Endothelial cell of umbilical vein (primary cell): ENCODE measurements at regions of chr6 and their contacts with region 1.

Region 1: DNA sequence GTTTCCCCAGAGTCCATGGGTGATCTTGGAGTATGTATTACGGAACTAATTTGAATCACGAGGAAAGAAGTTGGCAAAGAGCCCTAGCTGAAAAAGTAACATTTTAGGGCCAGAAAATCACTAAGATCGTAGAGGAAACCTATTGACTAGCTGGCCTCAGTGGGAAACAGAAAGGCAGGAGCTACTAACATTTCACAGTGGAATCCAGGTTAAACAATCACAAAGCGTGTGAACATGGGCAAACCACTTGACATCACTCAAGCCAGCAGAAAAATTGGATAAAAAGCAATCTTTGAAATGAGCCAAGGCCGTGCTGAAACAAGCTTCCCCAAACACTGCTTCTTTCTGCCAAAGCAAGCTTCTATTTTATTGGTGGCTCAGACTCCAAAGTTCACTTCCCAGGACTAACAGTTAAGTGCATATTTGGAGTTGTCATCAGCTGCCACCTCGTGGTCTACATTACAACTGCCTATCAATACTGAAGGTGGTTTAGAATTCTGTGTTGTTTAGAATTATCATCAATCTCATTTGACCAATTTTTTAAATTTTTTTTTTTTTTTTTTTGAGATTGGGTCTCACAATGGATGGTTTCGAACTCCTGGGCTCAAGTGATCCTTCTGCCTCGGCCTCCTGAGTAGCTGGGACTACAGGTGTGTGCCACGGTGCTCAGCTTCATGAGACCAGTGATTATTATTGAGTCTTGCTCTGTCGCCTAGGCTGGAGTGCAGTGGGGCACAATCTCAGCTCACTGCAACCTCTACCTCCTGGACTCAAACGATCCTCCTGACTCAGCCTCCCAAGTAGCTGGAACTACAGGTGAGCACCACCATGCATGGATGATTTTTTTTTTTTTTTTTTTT is 10.6 kb downstream of the RPS10 start:
- DNase-seq: peak; percentile 77
- H3K4me3 ChIP-seq: no peak overlapping the region
- H3K27ac ChIP-seq: no peak overlapping the region
- H3K4me1 ChIP-seq: no peaks in the 10 kb centered on the region
- H3K27me3 ChIP-seq: no peaks in the 10 kb centered on the region
- CTCF ChIP-seq: peak; percentile 55 to 56
- POLR2A ChIP-seq: no peak

Region 2: GRCh38 chr6:32971581-32972352 is 1443.5 kb before region 1 on chr6:
- CTCF ChIA-PET with region 1: no interaction called
- POLR2A ChIA-PET with region 1: no interaction called
- dilution Hi-C with region 1: no loop called
- intact Hi-C with region 1: no loop called
- DNase-seq: peak; percentile 100
- H3K4me3 ChIP-seq: peak overlapping the region; percentile 83 to 96 (median 91)
- H3K27ac ChIP-seq: peak overlapping the region; percentile 99
- H3K4me1 ChIP-seq: peaks cover 29% of the 10 kb centered on the region
- H3K27me3 ChIP-seq: no peaks in the 10 kb centered on the region
- CTCF ChIP-seq: no peak
- POLR2A ChIP-seq: peak; percentile 100

Region 3: DNA sequence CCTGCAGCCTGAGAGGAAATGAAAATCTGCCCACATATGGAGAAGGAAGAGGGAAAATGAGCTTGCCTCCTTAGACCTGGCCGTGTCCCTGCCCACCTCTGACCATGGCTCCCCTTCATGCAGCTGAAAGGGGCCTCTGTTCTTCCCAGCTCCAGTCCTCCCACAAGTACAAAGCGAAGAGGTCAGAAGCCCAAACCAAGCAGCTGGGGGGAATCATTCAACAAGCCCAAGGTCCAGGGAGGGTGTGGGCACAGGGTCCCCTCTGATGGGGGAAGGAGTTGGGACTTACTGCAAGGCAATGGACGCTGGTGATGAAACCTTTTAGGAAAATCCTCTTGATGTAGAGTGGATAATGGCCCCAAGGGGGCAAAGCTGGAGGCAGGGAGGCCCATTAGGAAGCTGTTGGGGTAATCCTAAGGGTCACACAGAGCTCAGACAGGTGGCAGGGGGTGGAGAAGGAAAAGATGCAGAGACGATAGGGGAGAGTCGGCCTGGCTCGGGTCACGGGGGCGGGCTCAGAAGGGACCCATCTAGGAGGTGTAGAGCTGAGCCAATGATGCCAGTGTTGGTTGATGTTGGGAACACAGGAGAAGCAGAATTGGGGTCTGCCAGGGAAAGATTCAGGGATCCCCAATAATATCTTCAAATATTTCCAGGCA is 253.2 kb before region 1 on chr6:
- CTCF ChIA-PET with region 1: interaction called, 105 read pairs
- POLR2A ChIA-PET with region 1: interaction called, 4 read pairs
- dilution Hi-C with region 1: no loop called
- intact Hi-C with region 1: loop called (anchors 1 kb)
- DNase-seq: no peak
- H3K4me3 ChIP-seq: no peak overlapping the region
- H3K27ac ChIP-seq: no peak overlapping the region
- H3K4me1 ChIP-seq: no peaks in the 10 kb centered on the region
- H3K27me3 ChIP-seq: no peaks in the 10 kb centered on the region
- CTCF ChIP-seq: no peak
- POLR2A ChIP-seq: no peak

Region 4: DNA sequence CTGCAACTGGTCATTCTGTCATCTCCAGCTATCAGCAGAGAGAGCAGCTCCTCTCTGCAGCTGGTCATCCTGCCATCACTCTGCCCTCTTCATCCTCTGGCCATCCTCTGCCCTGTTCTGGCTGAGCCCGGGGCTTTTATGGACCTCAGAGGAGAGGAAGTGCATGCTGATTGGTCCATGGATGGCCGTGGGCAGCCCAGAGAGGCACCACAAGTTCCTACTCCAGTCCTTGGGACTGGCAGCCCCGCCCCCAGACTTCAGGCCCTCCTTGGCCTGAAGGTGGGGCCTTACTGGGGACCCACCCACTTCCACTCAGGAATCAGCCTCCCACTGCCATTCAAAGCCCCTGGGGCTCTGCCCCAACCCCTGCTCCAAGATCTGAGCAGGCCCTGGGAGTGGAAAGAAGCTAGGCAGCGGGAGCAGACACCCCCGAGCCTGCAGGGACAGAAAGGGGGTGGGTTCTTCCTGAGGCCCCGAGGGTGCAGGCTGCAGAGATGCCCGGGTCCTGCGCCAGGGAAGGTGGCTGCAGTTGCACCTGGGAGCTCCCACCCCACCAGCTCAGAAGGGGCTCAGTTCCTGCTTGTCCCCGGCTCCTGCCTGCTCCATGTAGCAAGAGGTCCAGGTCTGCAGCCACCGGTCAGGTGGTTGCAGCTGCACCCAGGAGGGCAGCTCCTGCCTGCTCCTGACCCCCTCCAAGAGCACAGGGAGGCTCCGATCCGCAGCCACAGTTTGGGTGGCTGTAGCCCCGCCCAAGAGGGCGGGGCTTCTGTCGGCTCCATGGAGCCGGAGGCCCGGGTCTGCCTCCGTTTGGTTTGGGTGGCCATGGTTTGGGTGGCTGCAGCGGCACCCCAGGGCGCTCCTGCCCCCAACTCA is 212.7 kb before region 1 on chr6:
- CTCF ChIA-PET with region 1: interaction called, 189 read pairs
- POLR2A ChIA-PET with region 1: no interaction called
- dilution Hi-C with region 1: no loop called
- intact Hi-C with region 1: no loop called
- DNase-seq: no peak
- H3K4me3 ChIP-seq: no peak overlapping the region
- H3K27ac ChIP-seq: no peak overlapping the region
- H3K4me1 ChIP-seq: no peaks in the 10 kb centered on the region
- H3K27me3 ChIP-seq: no peaks in the 10 kb centered on the region
- CTCF ChIP-seq: no peak
- POLR2A ChIP-seq: no peak

Region 5: GRCh38 chr6:34236131-34236996 is 178.9 kb before region 1 on chr6 and contains the start of gene HMGA1:
- CTCF ChIA-PET with region 1: interaction called, 15 read pairs
- POLR2A ChIA-PET with region 1: interaction called, 10 read pairs
- dilution Hi-C with region 1: no loop called
- intact Hi-C with region 1: no loop called
- DNase-seq: peak; percentile 88
- H3K4me3 ChIP-seq: peak within 1 kb of the TSS; percentile 94 to 98 (median 97)
- H3K27ac ChIP-seq: peak within 1 kb of the TSS; percentile 91
- H3K4me1 ChIP-seq: peaks cover 40% of the 10 kb centered on the region
- H3K27me3 ChIP-seq: no peaks in the 10 kb centered on the region
- CTCF ChIP-seq: no peak
- POLR2A ChIP-seq: peak; percentile 98
- total RNA-seq, gene HMGA1: 1,031 and 1,108 TPM in 2 replicates

Region 6: DNA sequence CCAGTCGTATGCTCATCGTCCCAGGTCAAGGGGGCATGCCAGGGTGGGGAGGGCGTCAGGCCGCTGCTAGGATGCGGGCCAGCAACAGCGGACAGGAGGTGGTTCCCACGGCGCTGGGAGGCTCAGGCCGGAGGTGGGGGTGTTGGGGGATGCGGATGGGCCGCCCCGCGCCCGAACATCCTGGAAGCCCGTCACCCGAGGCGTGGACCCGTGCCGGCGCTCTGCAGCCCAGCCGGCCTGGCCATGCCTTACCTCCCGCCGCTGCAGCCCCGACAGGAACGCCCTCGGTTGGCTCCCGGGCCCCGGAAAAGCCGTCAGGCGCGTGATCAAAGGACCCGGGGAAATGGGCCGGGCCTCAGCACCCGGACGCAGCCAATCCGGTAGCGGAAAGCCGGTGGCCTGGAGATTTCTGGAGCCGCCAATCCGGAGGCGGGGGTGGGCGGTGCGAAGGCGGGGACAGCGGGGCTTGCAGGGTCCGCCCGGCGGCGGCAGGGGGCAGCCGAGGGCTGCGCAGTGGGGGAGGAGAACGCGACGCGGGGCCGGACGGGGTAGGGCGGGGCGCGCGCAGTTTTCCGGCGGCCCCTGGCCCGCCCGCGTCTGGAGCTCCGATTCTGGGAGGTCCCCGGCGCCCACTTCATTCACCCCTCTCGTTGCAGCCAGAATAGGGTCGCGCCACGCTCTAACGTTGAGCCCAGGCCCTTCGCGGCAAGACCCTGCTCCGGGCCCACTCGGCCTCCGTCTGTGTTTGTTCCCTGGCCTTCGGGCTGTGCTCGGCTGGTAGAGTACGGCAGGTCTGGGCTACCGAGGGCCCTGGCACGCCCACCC is 166.3 kb before region 1 on chr6 and contains the start of gene SMIM29:
- CTCF ChIA-PET with region 1: interaction called, 278 read pairs
- POLR2A ChIA-PET with region 1: interaction called, 22 read pairs
- dilution Hi-C with region 1: no loop called
- intact Hi-C with region 1: loop called (anchors 1 kb)
- DNase-seq: peak; percentile 90
- H3K4me3 ChIP-seq: peak within 1 kb of the TSS; percentile 66 to 88 (median 80)
- H3K27ac ChIP-seq: peak within 1 kb of the TSS; percentile 81
- H3K4me1 ChIP-seq: peaks cover 33% of the 10 kb centered on the region
- H3K27me3 ChIP-seq: no peaks in the 10 kb centered on the region
- CTCF ChIP-seq: peak; percentile 84 to 89
- POLR2A ChIP-seq: peak; percentile 86
- total RNA-seq, gene SMIM29: 37.3 and 37.6 TPM in 2 replicates

Region 7: DNA sequence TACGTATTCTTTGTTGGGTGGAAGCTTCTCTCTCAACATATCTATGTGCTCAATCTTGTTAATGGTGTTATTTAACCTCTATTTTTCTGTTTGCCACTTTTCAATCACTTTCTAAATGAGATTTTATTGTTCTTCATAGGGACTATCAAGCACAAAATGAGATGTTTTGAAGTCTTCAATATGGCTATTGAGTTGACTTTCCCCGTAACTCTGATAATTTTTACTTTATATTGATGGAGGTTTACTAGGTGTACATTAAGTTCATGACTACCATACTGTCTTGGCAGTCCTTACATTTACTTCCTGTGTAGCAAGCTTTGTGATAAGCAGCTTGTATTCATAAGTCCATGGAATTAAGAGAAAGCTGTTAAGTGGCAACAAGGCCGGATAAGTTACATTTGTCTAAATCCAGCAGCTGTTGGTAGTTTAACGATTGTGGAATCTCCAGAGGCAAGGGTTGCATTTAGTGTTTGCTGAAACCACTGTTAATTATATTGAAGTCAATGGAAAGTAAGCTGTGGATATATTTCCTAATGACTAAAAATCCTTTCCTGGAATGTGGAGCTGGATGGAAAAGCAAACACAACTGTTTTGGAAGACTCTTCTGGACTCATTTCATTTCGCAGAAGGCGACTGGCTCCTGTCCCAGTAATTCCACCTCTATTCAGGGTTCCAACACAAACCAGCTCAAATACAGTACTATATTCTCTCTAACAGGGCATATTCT is 109.1 kb before region 1 on chr6:
- CTCF ChIA-PET with region 1: interaction called, 11 read pairs
- POLR2A ChIA-PET with region 1: no interaction called
- dilution Hi-C with region 1: no loop called
- intact Hi-C with region 1: no loop called
- DNase-seq: peak; percentile 92
- H3K4me3 ChIP-seq: no peak overlapping the region
- H3K27ac ChIP-seq: peak overlapping the region; percentile 25
- H3K4me1 ChIP-seq: peaks cover 14% of the 10 kb centered on the region
- H3K27me3 ChIP-seq: no peaks in the 10 kb centered on the region
- CTCF ChIP-seq: no peak
- POLR2A ChIP-seq: no peak

Region 8: DNA sequence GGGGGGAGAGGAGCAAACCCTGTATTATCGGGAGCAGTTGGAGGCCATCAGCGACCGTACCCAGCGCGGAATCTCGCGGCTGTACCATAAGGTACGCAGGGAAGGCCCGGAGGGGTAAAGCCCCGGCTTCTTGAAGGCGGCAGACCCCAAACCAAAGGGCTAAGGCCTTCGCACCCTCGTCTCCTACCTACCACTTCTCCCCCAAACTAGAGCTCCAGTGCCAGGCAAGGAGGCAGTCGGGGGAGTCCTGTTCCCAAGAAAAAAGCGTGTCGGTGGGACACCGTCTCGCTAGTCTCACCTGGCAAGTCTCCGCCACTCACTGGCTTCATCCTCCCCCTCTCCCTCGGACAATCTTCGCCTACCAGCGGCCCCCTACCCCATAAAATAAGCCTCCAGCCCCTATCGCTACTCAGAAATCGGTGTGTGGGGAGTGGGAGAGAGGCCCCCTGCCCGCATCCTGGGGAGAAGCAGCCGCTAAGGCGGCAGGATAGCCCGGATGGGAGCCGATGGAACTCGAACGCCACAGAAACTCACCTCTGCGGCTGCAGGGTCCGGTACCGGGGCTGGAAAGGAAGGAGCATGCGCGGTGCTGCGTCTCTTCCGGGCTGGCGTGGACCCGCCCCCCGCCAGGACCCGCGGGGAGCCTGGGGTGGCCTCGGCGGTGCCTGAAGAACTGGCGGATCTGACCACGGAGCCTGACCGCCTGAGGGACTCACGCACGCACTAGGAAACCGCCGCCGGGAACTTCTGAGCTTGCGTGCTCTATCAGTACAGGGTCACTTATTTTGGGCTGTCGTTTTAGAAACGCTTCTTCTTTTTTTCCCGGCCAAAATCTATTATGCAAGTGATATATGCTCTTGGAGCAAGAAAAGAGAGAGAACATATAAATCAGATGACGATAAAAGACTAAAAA is 10.5 kb after region 1 on chr6 and contains the start of gene RPS10:
- CTCF ChIA-PET with region 1: interaction called, 15 read pairs
- POLR2A ChIA-PET with region 1: interaction called, 4 read pairs
- dilution Hi-C with region 1: no loop called
- intact Hi-C with region 1: no loop called
- DNase-seq: peak; percentile 96
- H3K4me3 ChIP-seq: peak within 1 kb of the TSS; percentile 66 to 95 (median 90)
- H3K27ac ChIP-seq: peak within 1 kb of the TSS; percentile 79
- H3K4me1 ChIP-seq: peaks cover 15% of the 10 kb centered on the region
- H3K27me3 ChIP-seq: no peaks in the 10 kb centered on the region
- CTCF ChIP-seq: no peak
- POLR2A ChIP-seq: peak; percentile 91
- total RNA-seq, gene RPS10: 1,295 and 1,416 TPM in 2 replicates

Region 9: GRCh38 chr6:34546551-34547321 is 131.5 kb after region 1 on chr6:
- CTCF ChIA-PET with region 1: no interaction called
- POLR2A ChIA-PET with region 1: no interaction called
- dilution Hi-C with region 1: no loop called
- intact Hi-C with region 1: no loop called
- DNase-seq: peak; percentile 18
- H3K4me3 ChIP-seq: no peak overlapping the region
- H3K27ac ChIP-seq: no peak overlapping the region
- H3K4me1 ChIP-seq: peaks cover 6% of the 10 kb centered on the region
- H3K27me3 ChIP-seq: no peaks in the 10 kb centered on the region
- CTCF ChIP-seq: no peak
- POLR2A ChIP-seq: no peak